ENCODE measurements at regions of chr1 and their contacts with region 1.

Region 1: GRCh38 chr1:234473118-234473517 is 5.9 kb downstream of the TARBP1 start:
- DNase-seq: no peak
- H3K4me3 ChIP-seq: no peak overlapping the region
- H3K27ac ChIP-seq: no peak overlapping the region
- H3K4me1 ChIP-seq: peaks cover 16% of the 10 kb centered on the region
- H3K27me3 ChIP-seq: no peaks in the 10 kb centered on the region
- CTCF ChIP-seq: no peak

Region 2: DNA sequence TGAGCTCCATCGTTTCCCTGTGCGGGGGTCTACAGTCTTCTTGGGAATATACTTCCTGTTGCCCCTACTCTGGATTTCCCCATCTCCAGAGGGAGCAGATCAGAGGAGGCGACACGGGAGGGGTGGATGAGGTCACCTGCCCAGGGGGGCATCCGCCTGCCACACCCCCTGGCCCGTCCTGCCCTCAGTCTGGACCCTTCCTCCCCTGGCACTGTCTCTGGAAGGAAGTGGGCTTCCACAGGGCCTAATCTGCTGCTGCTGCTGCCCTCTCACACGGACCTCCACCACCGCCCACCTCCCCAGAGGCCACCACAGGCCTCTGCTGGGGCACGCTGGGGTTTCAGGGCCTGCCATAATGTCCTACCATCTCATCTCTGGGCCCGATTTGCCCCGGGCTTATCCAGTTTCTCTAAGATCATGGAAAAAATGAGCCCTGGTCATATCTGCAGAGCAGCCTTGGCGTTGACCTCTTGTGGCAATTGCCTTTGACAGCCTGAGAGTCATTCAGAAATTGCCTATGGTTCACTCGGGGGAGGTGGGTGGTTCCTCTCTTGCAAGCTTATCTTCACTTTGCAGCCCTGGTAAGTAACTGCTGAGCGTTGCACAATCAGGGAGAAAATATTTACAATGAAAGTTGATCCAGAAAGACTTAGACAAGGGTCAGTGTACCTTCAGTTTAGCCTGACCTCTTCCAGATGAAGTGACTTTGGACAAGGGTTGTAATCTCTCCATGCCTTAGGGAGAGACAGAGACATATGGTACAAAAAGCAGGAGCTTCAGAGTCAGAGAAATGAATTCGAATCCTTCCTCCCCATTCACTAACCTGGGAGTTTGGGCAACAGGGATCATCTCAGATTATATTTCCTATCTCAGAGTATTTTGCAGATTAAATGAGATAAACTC is 403.1 kb after region 1 on chr1:
- CTCF ChIA-PET with region 1: no interaction called
- POLR2A ChIA-PET with region 1: interaction called, 13 read pairs
- intact Hi-C with region 1: no loop called
- DNase-seq: peak; percentile 70 to 98
- H3K4me3 ChIP-seq: peak overlapping the region; percentile 45; the same call in 1 of the 2 replicates
- H3K27ac ChIP-seq: peak overlapping the region; percentile 99
- H3K4me1 ChIP-seq: peaks cover 70% of the 10 kb centered on the region
- H3K27me3 ChIP-seq: no peaks in the 10 kb centered on the region
- CTCF ChIP-seq: no peak

Region 3: GRCh38 chr1:235105051-235106043 is 632.2 kb after region 1 on chr1:
- CTCF ChIA-PET with region 1: no interaction called
- POLR2A ChIA-PET with region 1: interaction called, 30 read pairs
- intact Hi-C with region 1: no loop called
- DNase-seq: no peak
- H3K4me3 ChIP-seq: no peak overlapping the region
- H3K27ac ChIP-seq: no peak overlapping the region
- H3K4me1 ChIP-seq: no peaks in the 10 kb centered on the region
- H3K27me3 ChIP-seq: no peaks in the 10 kb centered on the region
- CTCF ChIP-seq: no peak

Region 4: DNA sequence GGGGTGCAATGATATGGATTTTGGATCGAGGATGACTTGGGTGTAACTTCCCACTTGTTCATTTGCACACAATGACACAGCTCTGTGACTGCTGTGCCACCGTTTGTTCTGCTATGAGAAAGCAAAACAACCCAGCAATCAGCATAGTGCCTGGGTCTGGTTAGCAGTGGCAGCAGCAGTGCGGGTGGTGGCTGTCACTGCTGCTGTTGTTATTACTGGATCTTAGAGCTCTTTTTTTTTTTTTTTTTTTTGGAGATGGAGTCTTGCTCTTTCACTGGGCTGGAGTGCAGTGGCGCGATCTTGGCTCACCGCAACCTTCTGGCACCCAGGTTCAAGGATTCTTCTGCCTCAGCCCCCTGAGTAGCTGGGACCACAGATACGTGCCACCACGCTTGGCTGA is 951.0 kb after region 1 on chr1:
- CTCF ChIA-PET with region 1: no interaction called
- POLR2A ChIA-PET with region 1: interaction called, 18 read pairs
- intact Hi-C with region 1: no loop called
- DNase-seq: no peak
- H3K4me3 ChIP-seq: no peak overlapping the region
- H3K27ac ChIP-seq: no peak overlapping the region
- H3K4me1 ChIP-seq: no peaks in the 10 kb centered on the region
- H3K27me3 ChIP-seq: no peaks in the 10 kb centered on the region
- CTCF ChIP-seq: no peak